K562 (cell line): ENCODE measurements at regions of chr7 and their contacts with region 1.

Region 1: GRCh38 chr7:112550468-112551060 is 69.8 kb downstream of the LSMEM1 start:
- DNase-seq: peak; percentile 64 to 85 (median 66)
- ATAC-seq: peak; percentile 88
- H3K4me3 ChIP-seq: no peak overlapping the region
- H3K27ac ChIP-seq: no peak overlapping the region
- H3K4me1 ChIP-seq: peaks cover 0 to 5% of the 10 kb centered on the region in 2 experiments; a peak in 2 of 5 replicates
- H3K27me3 ChIP-seq: peaks cover 0 to 10% of the 10 kb centered on the region in 2 experiments; a peak in 3 of 5 replicates
- CTCF ChIP-seq: peak; percentile 90 to 99 (median 91)
- EP300 ChIP-seq: 0 out of 2 replicates have a peak, but pooled peaks have one; percentile 27
- POLR2A ChIP-seq: no peak
- RAD21 ChIP-seq: peak; percentile 99 to 100

Region 2: GRCh38 chr7:111752022-111752582 is 798.5 kb before region 1 on chr7:
- CTCF ChIA-PET with region 1: no interaction called
- POLR2A ChIA-PET with region 1: no interaction called
- in situ Hi-C with region 1: no loop called
- intact Hi-C with region 1: loop called (anchors 2 kb)
- DNase-seq: peak; percentile 85 to 93 (median 89)
- ATAC-seq: peak; percentile 99
- H3K4me3 ChIP-seq: no peak overlapping the region
- H3K27ac ChIP-seq: no peak overlapping the region
- H3K4me1 ChIP-seq: no peaks in the 10 kb centered on the region
- H3K27me3 ChIP-seq: peaks cover 3 to 9% of the 10 kb centered on the region in 2 experiments; a peak in 1 of 5 replicates
- CTCF ChIP-seq: peak; percentile 95 to 98 (median 96)
- EP300 ChIP-seq: no peak
- POLR2A ChIP-seq: no peak
- RAD21 ChIP-seq: peak; percentile 73 to 88

Region 3: GRCh38 chr7:112495810-112496462 is 54.6 kb before region 1 on chr7:
- CTCF ChIA-PET with region 1: no interaction called
- POLR2A ChIA-PET with region 1: no interaction called
- in situ Hi-C with region 1: no loop called
- intact Hi-C with region 1: loop called (anchors 2 kb)
- DNase-seq: peak in 3 of 4 experiments; percentile 42 to 73 (median 53)
- ATAC-seq: peak; percentile 86
- H3K4me3 ChIP-seq: no peak overlapping the region
- H3K27ac ChIP-seq: no peak overlapping the region
- H3K4me1 ChIP-seq: no peaks in the 10 kb centered on the region
- H3K27me3 ChIP-seq: peaks cover 11 to 13% of the 10 kb centered on the region in 2 experiments
- CTCF ChIP-seq: peak; percentile 75 to 86 (median 75)
- EP300 ChIP-seq: no peak
- POLR2A ChIP-seq: no peak
- RAD21 ChIP-seq: peak; percentile 94 to 95

Region 4: GRCh38 chr7:112898432-112899290 is 348.1 kb after region 1 on chr7:
- CTCF ChIA-PET with region 1: interaction called, 18 read pairs
- POLR2A ChIA-PET with region 1: no interaction called
- in situ Hi-C with region 1: no loop called
- intact Hi-C with region 1: loop called (anchors 1 kb)
- DNase-seq: peak; percentile 68 to 86 (median 72)
- ATAC-seq: peak; percentile 99
- H3K4me3 ChIP-seq: no peak overlapping the region
- H3K27ac ChIP-seq: no peak overlapping the region
- H3K4me1 ChIP-seq: no peaks in the 10 kb centered on the region; a peak in 1 of 5 replicates
- H3K27me3 ChIP-seq: no peaks in the 10 kb centered on the region
- CTCF ChIP-seq: peak; percentile 88 to 95 (median 91)
- EP300 ChIP-seq: no peak
- POLR2A ChIP-seq: no peak
- RAD21 ChIP-seq: peak; percentile 94 to 97

Region 5: GRCh38 chr7:113289140-113289740 is 738.7 kb after region 1 on chr7:
- CTCF ChIA-PET with region 1: interaction called, 9 read pairs
- POLR2A ChIA-PET with region 1: no interaction called
- in situ Hi-C with region 1: no loop called
- intact Hi-C with region 1: loop called (anchors 5 kb)
- DNase-seq: peak in 2 of 4 experiments; percentile 21 to 62
- ATAC-seq: peak; percentile 96
- H3K4me3 ChIP-seq: no peak overlapping the region
- H3K27ac ChIP-seq: no peak overlapping the region
- H3K4me1 ChIP-seq: peaks cover 0 to 6% of the 10 kb centered on the region in 2 experiments; a peak in 1 of 5 replicates
- H3K27me3 ChIP-seq: no peaks in the 10 kb centered on the region; a peak in 1 of 5 replicates
- CTCF ChIP-seq: peak; percentile 74 to 89 (median 75)
- EP300 ChIP-seq: no peak
- POLR2A ChIP-seq: no peak
- RAD21 ChIP-seq: peak; percentile 84 to 86

Region 6: DNA sequence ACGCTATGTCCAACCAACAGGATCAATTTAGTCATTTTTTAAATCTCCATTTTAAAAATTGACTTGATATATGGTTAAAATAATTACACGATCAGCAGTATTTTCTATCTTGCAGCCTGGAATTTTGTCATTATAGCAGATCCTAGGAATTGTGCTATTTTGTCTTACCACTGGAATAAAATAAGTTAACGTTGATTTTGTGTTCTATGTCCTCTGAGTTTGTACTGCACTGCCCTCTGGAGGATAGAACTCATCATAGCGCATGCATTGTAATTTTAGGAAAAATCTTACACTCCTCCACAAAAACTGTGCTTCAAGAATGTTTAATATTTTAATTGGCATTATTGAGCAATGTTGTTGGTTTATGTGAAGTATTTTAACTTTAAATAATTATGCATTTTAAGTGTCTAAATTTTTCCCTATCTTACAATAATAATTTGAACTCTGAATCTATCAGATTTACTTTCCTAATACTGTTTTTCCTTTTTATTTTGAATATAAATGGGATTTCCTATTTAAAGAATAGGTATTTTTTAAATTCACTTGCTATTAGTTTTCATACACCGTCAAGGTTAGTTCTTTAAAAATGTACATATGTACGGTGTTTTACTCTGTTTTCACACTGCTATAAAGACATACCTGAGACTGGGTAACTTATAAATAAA is 1148.1 kb after region 1 on chr7:
- CTCF ChIA-PET with region 1: no interaction called
- POLR2A ChIA-PET with region 1: no interaction called
- in situ Hi-C with region 1: no loop called
- intact Hi-C with region 1: loop called (anchors 5 kb)
- DNase-seq: peak; percentile 9 to 40 (median 20)
- ATAC-seq: no peak
- H3K4me3 ChIP-seq: no peak overlapping the region
- H3K27ac ChIP-seq: no peak overlapping the region
- H3K4me1 ChIP-seq: no peaks in the 10 kb centered on the region
- H3K27me3 ChIP-seq: no peaks in the 10 kb centered on the region
- CTCF ChIP-seq: peak; percentile 32 to 69 (median 60); a peak in 5 of 6 replicates
- EP300 ChIP-seq: no peak
- POLR2A ChIP-seq: no peak
- RAD21 ChIP-seq: peak; percentile 69 to 82